Activated CD4-positive, alpha-beta memory T cell treated with anti-CD3 and anti-CD28 coated beads for 36 hours (primary cell): ENCODE measurements at regions of chr17 and their contacts with region 1.

Region 1: GRCh38 chr17:2266045-2266864 is 37.3 kb downstream of the SMG6 start:
- DNase-seq: peak; percentile 94
- H3K4me3 Mint-ChIP-seq: peak overlapping the region; percentile 79
- H3K27ac Mint-ChIP-seq: peak overlapping the region; percentile 99
- H3K4me1 Mint-ChIP-seq: peaks cover 81% of the 10 kb centered on the region
- H3K27me3 Mint-ChIP-seq: no peaks in the 10 kb centered on the region

Region 2: GRCh38 chr17:2090804-2091534 is 175.3 kb before region 1 on chr17:
- CTCF ChIA-PET with region 1: no interaction called
- POLR2A ChIA-PET with region 1: interaction called, 10 read pairs
- intact Hi-C with region 1: loop called (anchors 2 kb)
- DNase-seq: no peak
- H3K4me3 Mint-ChIP-seq: peak overlapping the region; percentile 83
- H3K27ac Mint-ChIP-seq: peak overlapping the region; percentile 9
- H3K4me1 Mint-ChIP-seq: peaks cover 59% of the 10 kb centered on the region
- H3K27me3 Mint-ChIP-seq: no peaks in the 10 kb centered on the region

Region 3: DNA sequence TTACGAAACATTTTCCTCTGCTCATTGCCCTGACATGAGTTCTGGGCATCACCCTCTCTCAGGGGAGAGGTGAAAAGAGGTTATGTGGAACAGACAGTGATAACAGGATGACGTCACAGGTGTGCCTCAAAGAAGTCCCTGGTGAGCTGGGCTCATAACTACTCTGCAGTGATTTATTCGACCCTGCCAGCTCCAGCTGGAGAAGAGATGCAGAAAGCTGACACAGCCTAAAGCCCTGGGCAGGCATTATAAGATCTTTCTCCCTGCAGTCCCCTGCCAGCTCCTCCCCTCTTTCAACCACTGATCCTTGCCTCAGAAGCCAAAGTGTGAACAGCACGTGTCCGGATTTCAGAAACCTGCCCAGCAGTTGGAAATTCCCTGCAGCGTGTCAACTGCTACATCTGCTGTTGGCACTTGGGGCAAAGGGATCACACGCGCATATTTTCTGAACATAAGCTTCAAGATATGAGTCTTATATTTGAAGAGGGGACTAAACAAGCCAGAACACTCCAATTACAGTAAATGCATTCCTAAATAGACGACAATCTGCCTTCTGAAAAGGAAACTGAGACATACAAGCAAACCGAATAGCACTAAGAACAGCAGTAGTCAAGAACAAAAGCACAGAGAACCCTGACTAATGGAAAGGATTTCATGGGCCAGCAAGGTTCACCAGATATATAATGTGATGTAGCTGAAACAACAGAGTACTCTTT is 43.2 kb before region 1 on chr17:
- CTCF ChIA-PET with region 1: interaction called, 4 read pairs
- POLR2A ChIA-PET with region 1: no interaction called
- intact Hi-C with region 1: loop called (anchors 2 kb)
- DNase-seq: peak; percentile 81
- H3K4me3 Mint-ChIP-seq: peak overlapping the region; percentile 57
- H3K27ac Mint-ChIP-seq: peak overlapping the region; percentile 83
- H3K4me1 Mint-ChIP-seq: peaks cover 37% of the 10 kb centered on the region
- H3K27me3 Mint-ChIP-seq: no peaks in the 10 kb centered on the region

Region 4: DNA sequence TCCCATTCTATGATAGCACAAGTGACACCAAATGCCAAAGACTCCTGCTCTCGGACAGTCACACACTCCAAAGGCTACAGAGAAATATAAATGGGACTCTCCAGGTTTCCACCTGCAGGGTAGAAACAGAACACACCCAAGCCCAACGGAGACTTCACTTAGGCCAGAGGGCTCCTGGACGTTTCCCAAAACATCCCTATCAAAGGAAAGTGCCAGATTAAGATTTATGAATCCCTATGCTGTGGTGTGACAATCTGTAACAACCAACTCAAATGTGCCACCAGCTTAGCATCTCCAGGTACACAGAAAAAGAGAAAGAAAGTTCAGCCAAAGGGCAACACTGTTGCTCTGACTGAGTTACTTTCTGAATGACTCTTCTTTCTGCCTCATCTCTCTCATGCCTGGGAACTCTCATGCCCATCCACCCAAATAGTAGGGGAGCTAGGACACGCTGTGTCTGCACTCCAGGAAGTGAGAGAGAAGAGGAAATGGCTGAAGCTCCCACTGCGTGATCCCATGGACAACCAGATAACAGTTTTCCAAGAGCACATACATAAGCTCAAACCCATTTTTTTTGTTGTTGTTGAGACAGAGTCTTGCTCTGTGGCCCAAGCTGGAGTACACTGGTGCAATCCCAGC is 12.4 kb before region 1 on chr17:
- CTCF ChIA-PET with region 1: interaction called, 41 read pairs
- POLR2A ChIA-PET with region 1: interaction called, 61 read pairs
- intact Hi-C with region 1: loop called (anchors 1 kb)
- DNase-seq: peak; percentile 63
- H3K4me3 Mint-ChIP-seq: peak overlapping the region; percentile 53
- H3K27ac Mint-ChIP-seq: peak overlapping the region; percentile 90
- H3K4me1 Mint-ChIP-seq: peaks cover 63% of the 10 kb centered on the region
- H3K27me3 Mint-ChIP-seq: no peaks in the 10 kb centered on the region

Region 5: GRCh38 chr17:2282297-2282873 is 16.1 kb after region 1 on chr17:
- CTCF ChIA-PET with region 1: interaction called, 4 read pairs
- POLR2A ChIA-PET with region 1: interaction called, 4 read pairs
- intact Hi-C with region 1: loop called (anchors 1 kb)
- DNase-seq: no peak
- H3K4me3 Mint-ChIP-seq: no peak overlapping the region
- H3K27ac Mint-ChIP-seq: peak overlapping the region; percentile 33
- H3K4me1 Mint-ChIP-seq: peaks cover 12% of the 10 kb centered on the region
- H3K27me3 Mint-ChIP-seq: no peaks in the 10 kb centered on the region

Region 6: DNA sequence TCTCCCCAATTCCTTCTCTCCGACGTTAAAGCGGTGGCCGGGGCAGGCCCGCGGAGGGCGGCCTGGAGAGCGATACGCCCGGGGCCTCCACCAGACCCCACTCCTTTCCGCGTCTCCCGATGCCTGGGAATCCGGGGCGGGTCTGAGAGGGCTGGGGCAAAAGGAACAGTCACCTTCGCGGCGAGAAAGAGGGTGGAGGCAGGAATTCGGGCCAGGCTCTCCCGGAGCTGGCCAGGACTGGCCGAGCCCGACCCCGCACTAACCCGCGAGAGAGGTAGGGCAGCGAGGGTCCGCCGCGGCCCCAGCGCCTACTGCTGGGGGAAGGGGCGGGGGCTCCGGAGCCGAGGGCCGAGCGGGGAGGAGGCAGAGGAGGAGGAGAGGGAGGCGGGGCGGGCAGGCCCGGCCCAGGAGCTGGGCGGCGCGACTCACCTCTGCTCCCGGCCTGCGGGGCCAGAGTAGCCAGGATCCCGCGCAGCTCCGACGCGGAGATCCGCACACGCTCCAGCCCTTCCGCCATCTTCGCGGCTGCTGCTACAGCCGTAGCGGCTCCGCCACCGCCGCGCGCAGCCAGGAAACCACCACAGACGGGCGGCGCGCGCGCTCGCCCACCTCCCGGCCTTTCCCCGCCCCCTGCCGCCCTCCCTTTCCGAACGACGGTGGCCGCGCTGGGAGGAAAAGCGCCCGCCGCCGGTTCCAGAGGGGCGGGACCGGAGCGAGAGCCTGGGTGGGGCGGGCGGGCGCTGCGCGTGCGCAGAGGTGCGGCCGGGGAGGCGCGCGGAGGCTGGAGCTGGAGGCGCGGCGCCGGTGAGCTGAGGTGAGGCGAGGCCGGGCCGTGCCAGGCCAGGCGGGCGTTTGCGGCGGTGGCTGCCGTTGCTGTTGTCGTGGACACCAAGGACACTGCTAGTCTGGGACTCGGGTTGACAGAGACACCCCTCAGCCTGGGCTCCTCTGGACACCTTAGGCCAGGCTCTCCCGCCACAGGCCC is 37.2 kb after region 1 on chr17 and contains the starts of genes SMG6 and SRR:
- CTCF ChIA-PET with region 1: no interaction called
- POLR2A ChIA-PET with region 1: interaction called, 4 read pairs
- intact Hi-C with region 1: loop called (anchors 2 kb)
- DNase-seq: peak; percentile 96
- H3K4me3 Mint-ChIP-seq: peak within 1 kb of the TSS; percentile 90
- H3K27ac Mint-ChIP-seq: peak within 1 kb of the TSS; percentile 75
- H3K4me1 Mint-ChIP-seq: peaks cover 46% of the 10 kb centered on the region
- H3K27me3 Mint-ChIP-seq: no peaks in the 10 kb centered on the region
- total RNA-seq, gene SMG6: 17.2 to 20.3 TPM
- total RNA-seq, gene SRR: 20.0 to 22.2 TPM